Breast epithelium (tissue), 4 donors: ENCODE measurements at regions of chr7 and their contacts with region 1.

Region 1: DNA sequence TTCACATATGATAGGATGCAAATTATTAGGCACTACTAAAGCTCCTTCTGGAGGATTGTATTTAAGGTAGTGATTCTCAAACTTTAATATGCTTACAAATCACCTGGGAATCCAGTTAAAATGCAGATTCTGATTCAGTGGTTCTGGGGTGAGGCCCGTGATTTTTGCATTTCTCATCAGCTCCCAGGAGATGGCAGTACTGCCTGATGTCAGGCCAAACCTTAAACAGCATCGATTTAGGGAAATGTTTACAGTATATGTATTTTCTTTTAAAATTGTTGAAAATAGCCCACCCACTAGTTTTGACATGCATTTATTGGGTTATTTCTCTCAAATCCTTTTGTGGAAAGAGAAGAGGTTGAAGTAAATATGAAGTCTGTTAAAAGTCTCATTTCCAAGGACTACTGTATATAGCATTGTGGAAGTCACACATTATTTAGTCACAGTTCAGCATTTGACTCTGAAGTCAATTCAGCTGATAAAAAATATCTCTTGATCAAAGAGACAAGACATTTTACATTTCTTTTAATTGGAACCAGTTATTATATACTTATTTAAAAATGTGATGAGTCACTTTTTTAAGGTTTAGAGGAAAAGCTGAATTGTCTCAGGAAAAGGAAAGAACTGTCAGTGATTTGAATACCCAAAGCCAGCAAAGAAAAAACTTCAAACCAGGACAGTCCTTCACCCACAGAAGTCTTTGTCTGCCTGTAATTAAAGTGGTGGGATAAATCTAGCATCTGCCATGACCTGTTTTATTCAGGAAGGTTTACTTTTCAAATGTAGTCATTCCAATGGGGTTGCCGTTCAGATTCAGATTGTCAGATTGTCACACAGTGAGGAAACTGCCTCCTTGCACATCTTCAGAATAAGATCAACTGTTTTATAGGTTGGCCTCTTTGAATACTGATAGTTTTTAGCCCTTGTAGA is 21.1 kb upstream of the HBP1 start:
- DNase-seq: no peak
- H3K4me3 ChIP-seq: no peak overlapping the region
- H3K27ac ChIP-seq: no peak overlapping the region
- H3K4me1 ChIP-seq: peaks cover 0 to 3% of the 10 kb centered on the region in 2 donors
- H3K27me3 ChIP-seq: no peaks in the 10 kb centered on the region
- CTCF ChIP-seq: peak in 2 of 3 donors; percentile 43 to 46
- POLR2A ChIP-seq: no peak

Region 2: GRCh38 chr7:106802589-106802988 is 345.1 kb before region 1 on chr7:
- intact Hi-C with region 1: loop called (anchors 5 kb)
- DNase-seq: no peak
- H3K4me3 ChIP-seq: no peak overlapping the region
- H3K27ac ChIP-seq: no peak overlapping the region
- H3K4me1 ChIP-seq: no peaks in the 10 kb centered on the region
- H3K27me3 ChIP-seq: no peaks in the 10 kb centered on the region
- CTCF ChIP-seq: no peak
- POLR2A ChIP-seq: no peak

Region 3: GRCh38 chr7:106840342-106840741 is 307.4 kb before region 1 on chr7:
- intact Hi-C with region 1: loop called (anchors 5 kb)
- DNase-seq: no peak
- H3K4me3 ChIP-seq: no peak overlapping the region
- H3K27ac ChIP-seq: no peak overlapping the region
- H3K4me1 ChIP-seq: no peaks in the 10 kb centered on the region
- H3K27me3 ChIP-seq: no peaks in the 10 kb centered on the region
- CTCF ChIP-seq: no peak
- POLR2A ChIP-seq: no peak